ENCODE measurements at regions of chr10 and their contacts with region 1.

Region 1: DNA sequence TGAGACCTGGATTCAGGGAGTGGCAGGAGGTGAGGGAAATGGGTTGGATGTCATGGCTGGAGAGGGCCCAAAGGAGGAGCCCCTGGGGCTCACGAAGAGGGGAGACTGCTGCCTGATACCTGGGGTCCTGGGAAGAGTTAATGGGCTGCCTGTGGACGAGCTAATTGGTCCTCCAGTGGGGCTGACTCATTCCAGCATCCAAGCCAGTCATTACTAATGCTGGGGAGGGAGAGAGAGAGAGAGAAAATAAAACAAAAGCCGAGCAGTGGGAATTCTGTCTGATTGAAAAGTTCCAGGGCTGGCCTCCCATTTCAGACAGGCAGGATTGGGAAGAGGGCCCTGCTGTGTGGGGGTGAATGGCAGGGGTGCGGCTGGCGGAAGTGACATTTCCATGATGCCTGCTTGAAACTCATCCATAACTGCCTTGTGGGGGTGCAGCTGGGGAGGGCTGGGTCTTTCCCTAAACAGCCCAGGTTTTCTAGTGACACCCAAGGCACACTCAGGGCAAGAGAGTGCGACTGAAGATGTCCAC is 297.8 kb downstream of the RPS24 start:
- DNase-seq: no peak
- ATAC-seq: peak; percentile 45
- H3K4me3 ChIP-seq: no peak overlapping the region
- H3K27ac ChIP-seq: peak overlapping the region in 1 of 2 donors; percentile 64
- H3K4me1 ChIP-seq: peaks cover 4 to 7% of the 10 kb centered on the region in 2 donors
- H3K27me3 ChIP-seq: no peaks in the 10 kb centered on the region

Region 2: GRCh38 chr10:78248651-78249464 is 82.6 kb before region 1 on chr10:
- intact Hi-C with region 1: no loop called
- DNase-seq: peak in 1 of 2 donors; percentile 73
- ATAC-seq: peak; percentile 67
- H3K4me3 ChIP-seq: no peak overlapping the region
- H3K27ac ChIP-seq: peak overlapping the region in 1 of 2 donors; percentile 65
- H3K4me1 ChIP-seq: no peaks in the 10 kb centered on the region
- H3K27me3 ChIP-seq: no peaks in the 10 kb centered on the region

Region 3: DNA sequence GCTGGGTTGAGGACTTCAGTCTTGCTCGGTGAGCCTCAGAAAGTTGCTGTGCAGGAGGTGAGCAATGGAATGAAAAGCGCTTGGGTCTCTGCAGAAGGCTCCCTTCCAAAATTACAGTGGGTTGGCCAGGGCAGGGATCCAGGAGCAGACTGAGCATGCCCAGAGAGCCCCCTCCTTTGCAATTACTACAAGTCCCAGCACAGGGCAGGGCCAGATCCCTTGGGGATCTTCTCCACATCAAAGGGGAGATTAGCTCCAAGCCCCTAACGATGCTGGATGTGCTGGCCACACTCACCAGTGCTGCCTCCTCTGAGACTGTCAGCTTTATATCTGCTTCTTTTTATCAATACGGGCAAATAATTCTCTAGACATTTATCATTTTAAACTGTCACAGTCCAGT is 39.7 kb after region 1 on chr10:
- intact Hi-C with region 1: no loop called
- DNase-seq: peak; percentile 35 to 50
- ATAC-seq: no peak
- H3K4me3 ChIP-seq: no peak overlapping the region
- H3K27ac ChIP-seq: no peak overlapping the region
- H3K4me1 ChIP-seq: no peaks in the 10 kb centered on the region
- H3K27me3 ChIP-seq: no peaks in the 10 kb centered on the region

Region 4: DNA sequence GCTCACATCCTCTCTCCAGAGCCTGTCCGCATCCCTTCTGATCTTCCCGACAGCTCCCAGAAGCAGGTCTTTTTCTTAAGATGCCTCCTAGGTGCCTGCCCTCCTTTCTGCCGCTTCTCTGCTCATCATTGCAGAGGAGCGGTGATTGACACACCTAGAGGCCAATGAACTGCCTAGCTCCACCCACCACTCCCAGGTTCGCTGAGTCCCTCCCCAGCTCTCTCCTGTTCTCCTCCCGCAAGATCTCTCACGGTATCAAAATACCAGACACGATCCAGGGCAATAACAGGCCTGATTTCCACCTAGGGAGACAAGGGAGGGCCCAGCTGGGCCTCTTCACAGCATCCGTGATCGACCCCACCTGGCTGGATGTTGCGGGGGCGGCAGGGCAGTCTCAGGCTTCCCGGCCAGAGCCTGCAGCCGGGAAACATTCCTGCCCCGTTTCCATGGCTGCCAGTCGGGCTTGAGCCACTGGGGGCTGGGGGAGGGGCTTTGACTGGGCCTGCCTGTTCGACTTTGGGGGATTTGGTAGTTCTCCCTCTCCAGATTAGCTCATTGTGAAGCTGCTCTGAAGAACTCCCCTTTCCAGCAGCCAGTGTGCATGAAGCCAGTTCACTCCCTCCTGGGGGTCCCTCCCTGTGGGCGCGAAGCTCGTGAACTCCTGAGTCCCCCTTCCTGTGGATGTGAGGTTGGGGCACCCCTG is 75.7 kb after region 1 on chr10:
- intact Hi-C with region 1: loop called in 1 of 2 experiments (anchors 5 kb)
- DNase-seq: peak; percentile 87 to 90
- ATAC-seq: peak; percentile 23
- H3K4me3 ChIP-seq: no peak overlapping the region
- H3K27ac ChIP-seq: no peak overlapping the region
- H3K4me1 ChIP-seq: peaks cover 0 to 3% of the 10 kb centered on the region in 2 donors
- H3K27me3 ChIP-seq: no peaks in the 10 kb centered on the region

Region 5: GRCh38 chr10:78437998-78438906 is 106.8 kb after region 1 on chr10:
- intact Hi-C with region 1: no loop called
- DNase-seq: no peak
- ATAC-seq: peak; percentile 23
- H3K4me3 ChIP-seq: no peak overlapping the region
- H3K27ac ChIP-seq: no peak overlapping the region
- H3K4me1 ChIP-seq: no peaks in the 10 kb centered on the region
- H3K27me3 ChIP-seq: no peaks in the 10 kb centered on the region